ENCODE measurements at regions of chr1 and their contacts with region 1.

Region 1: GRCh38 chr1:7539769-7540175 is 231.3 kb upstream of the VAMP3 start:
- DNase-seq: peak; percentile 34
- H3K4me3 ChIP-seq: no peak overlapping the region
- H3K27ac ChIP-seq: no peak overlapping the region
- H3K4me1 ChIP-seq: no peaks in the 10 kb centered on the region
- H3K27me3 ChIP-seq: no peaks in the 10 kb centered on the region
- CTCF ChIP-seq: peak; percentile 48 to 62
- POLR2A ChIP-seq: no peak

Region 2: DNA sequence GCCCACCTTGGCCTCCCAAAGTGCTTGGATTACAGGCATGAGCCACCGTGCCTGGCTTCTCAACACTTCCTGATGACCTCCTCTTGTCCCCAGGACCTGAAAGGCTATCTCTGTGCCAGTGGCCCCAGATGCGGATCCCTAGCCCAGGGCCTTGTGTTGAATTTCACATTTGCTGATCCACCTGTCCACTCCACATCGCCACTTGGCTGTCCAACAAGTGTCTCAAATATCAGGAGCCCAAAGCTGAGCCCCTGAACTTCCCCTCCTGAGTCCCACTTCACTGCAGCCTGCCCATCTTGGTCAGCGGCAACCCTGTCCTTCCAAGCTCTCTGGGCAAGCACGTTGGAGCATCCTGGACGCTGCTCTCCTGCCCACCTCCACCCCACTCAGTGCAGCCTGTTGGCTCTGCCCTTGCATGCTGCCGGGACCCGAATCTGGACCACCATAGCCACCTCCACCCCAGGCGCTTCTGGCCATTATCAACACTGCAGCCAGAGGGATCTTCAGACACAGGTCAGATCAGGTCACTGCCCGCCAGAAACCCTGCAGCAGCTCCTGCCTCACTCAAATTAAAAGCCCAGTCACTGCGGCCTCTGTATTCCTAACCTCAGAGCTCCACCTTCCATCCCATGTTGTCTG is 121.2 kb before region 1 on chr1:
- CTCF ChIA-PET with region 1: no interaction called
- POLR2A ChIA-PET with region 1: no interaction called
- dilution Hi-C with region 1: no loop called
- intact Hi-C with region 1: no loop called
- DNase-seq: no peak
- H3K4me3 ChIP-seq: no peak overlapping the region
- H3K27ac ChIP-seq: no peak overlapping the region
- H3K4me1 ChIP-seq: no peaks in the 10 kb centered on the region
- H3K27me3 ChIP-seq: no peaks in the 10 kb centered on the region
- CTCF ChIP-seq: no peak
- POLR2A ChIP-seq: no peak

Region 3: DNA sequence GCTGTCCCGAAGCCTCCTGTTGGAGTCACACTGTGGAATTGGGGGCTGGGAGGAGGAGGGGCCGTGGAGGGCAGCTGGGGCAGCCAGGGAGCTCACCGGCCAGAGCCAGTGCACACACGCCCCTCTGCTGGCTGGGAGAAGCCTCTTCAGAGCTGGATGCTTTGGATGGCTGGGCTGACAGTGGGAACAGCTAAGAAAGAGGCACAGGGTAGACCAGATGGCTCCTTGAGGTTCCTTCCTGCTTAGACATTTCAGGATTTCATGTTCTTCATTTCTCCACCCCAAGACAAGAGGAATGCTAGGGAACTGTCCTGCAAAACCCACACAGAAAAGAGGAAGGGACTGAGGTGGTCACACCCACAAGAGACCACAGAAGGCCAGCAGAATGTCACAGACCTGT is 23.4 kb before region 1 on chr1:
- CTCF ChIA-PET with region 1: no interaction called
- POLR2A ChIA-PET with region 1: no interaction called
- dilution Hi-C with region 1: no loop called
- intact Hi-C with region 1: no loop called
- DNase-seq: no peak
- H3K4me3 ChIP-seq: no peak overlapping the region
- H3K27ac ChIP-seq: no peak overlapping the region
- H3K4me1 ChIP-seq: no peaks in the 10 kb centered on the region
- H3K27me3 ChIP-seq: peaks cover 0 to 3% of the 10 kb centered on the region in 2 experiments
- CTCF ChIP-seq: no peak
- POLR2A ChIP-seq: no peak

Region 4: DNA sequence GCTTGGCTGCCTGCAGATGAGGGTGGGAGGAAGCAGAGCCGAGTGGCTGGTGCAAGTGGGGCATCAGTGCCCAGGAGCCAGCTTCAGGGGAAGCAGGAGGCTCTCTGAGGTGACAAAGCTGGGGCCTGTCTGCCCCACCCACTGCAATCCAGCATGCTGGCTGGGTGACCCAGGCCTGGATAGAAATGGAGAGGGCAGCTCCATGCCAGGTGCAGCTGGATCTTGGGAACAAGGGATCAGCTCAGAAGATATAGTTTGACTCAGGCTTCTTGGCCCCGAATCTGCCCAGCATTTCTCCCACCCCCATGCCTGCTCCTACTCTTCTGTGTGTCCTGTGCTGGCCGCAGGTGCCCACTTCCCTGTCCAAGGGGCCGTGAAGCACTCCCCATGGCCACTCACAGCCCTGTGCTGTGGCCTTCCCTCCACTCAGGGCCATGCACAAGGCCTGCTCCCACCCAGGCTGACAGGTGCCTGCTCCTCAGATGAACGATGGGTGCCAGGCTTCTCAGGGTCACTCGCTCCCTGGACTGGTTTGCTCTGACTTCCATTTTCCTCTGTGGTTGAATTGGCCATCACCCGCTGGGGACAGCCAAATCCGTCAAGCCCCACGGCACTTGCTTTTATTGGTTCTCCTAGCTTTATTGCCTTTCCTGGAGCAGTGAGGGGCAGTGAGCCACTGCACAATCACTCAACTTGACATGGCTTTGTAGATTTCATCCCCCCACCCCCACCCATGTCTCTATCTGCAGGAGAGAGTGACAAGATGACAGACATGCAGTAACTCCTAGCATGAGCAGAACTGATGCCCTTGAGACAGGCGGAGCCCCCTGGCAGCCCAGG is 56.6 kb after region 1 on chr1:
- CTCF ChIA-PET with region 1: no interaction called
- POLR2A ChIA-PET with region 1: no interaction called
- dilution Hi-C with region 1: no loop called
- intact Hi-C with region 1: no loop called
- DNase-seq: no peak
- H3K4me3 ChIP-seq: no peak overlapping the region
- H3K27ac ChIP-seq: no peak overlapping the region
- H3K4me1 ChIP-seq: no peaks in the 10 kb centered on the region
- H3K27me3 ChIP-seq: no peaks in the 10 kb centered on the region
- CTCF ChIP-seq: no peak
- POLR2A ChIP-seq: no peak

Region 5: GRCh38 chr1:7630378-7630777 is 90.6 kb after region 1 on chr1:
- CTCF ChIA-PET with region 1: no interaction called
- POLR2A ChIA-PET with region 1: no interaction called
- dilution Hi-C with region 1: no loop called
- intact Hi-C with region 1: no loop called
- DNase-seq: no peak
- H3K4me3 ChIP-seq: no peak overlapping the region
- H3K27ac ChIP-seq: no peak overlapping the region
- H3K4me1 ChIP-seq: no peaks in the 10 kb centered on the region
- H3K27me3 ChIP-seq: no peaks in the 10 kb centered on the region
- CTCF ChIP-seq: no peak
- POLR2A ChIP-seq: no peak

Region 6: DNA sequence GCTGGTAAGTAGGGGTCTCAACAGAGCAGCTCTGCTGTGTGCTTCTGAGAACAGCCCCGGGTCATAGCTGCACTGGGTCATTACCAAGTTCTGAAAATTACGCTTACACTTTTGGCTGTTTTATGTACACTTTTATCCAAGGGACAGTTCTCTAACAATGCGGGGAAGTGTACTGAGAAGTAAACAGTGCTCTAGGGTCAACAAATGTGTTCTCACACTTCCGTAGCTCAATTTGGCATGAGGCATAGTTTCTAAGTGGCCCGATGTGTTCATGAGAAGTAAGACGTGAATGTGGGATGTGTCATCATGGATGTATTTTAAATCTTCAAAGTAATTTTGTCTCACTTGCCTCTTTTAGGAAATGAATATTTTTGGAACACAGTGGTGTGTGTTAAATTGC is 220.5 kb after region 1 on chr1:
- CTCF ChIA-PET with region 1: no interaction called
- POLR2A ChIA-PET with region 1: no interaction called
- dilution Hi-C with region 1: no loop called
- intact Hi-C with region 1: loop called (anchors 10 kb)
- DNase-seq: peak; percentile 55
- H3K4me3 ChIP-seq: no peak overlapping the region
- H3K27ac ChIP-seq: peak overlapping the region; percentile 43
- H3K4me1 ChIP-seq: no peaks in the 10 kb centered on the region
- H3K27me3 ChIP-seq: no peaks in the 10 kb centered on the region
- CTCF ChIP-seq: no peak
- POLR2A ChIP-seq: no peak